ENCODE measurements at regions of chrX and their contacts with region 1.

Region 1: DNA sequence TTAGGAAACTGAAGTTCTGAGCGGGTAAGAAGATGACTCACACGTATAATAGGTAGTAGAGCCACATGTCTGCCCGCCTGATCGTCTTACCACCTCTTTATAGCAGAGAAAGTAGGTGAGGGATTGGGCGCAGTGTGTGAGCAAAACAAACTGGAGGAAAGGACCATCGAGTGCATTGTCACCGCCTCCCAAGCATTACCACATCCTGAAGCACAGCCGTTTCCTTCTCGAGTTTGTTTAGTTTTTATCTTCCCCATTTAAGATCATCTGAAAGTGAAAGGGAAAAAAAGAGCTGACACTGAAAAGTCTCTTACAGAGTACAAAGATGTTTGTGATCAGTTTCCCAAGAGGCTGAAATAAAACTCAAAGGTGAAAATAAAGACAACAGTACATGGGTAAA is 14.8 kb downstream of the PDK3 start:
- DNase-seq: peak; percentile 77 to 94 (median 89)
- H3K4me3 ChIP-seq: peak overlapping the region in 1 of 2 donors; percentile 44
- H3K4me3 Mint-ChIP-seq: peak overlapping the region; percentile 53 to 86 (median 74)
- H3K27ac ChIP-seq: peak overlapping the region; percentile 82
- H3K27ac Mint-ChIP-seq: peak overlapping the region; percentile 86 to 97 (median 92)
- H3K4me1 ChIP-seq: peaks cover 83% of the 10 kb centered on the region
- H3K4me1 Mint-ChIP-seq: peaks cover 42 to 89% (median 64%) of the 10 kb centered on the region in 4 donors
- H3K27me3 ChIP-seq: no peaks in the 10 kb centered on the region
- H3K27me3 Mint-ChIP-seq: no peaks in the 10 kb centered on the region

Region 2: GRCh38 chrX:24435060-24435459 is 44.9 kb before region 1 on chrX:
- CTCF ChIA-PET with region 1: no interaction called
- POLR2A ChIA-PET with region 1: no interaction called
- intact Hi-C with region 1: loop called (anchors 1 kb)
- DNase-seq: no peak
- H3K4me3 ChIP-seq: no peak overlapping the region
- H3K4me3 Mint-ChIP-seq: peak overlapping the region in 5 of 8 donors; percentile 14 to 69 (median 27)
- H3K27ac ChIP-seq: no peak overlapping the region
- H3K27ac Mint-ChIP-seq: no peak overlapping the region
- H3K4me1 ChIP-seq: peaks cover 12% of the 10 kb centered on the region
- H3K4me1 Mint-ChIP-seq: peaks cover 5 to 23% (median 15%) of the 10 kb centered on the region in 4 donors
- H3K27me3 ChIP-seq: no peaks in the 10 kb centered on the region
- H3K27me3 Mint-ChIP-seq: no peaks in the 10 kb centered on the region

Region 3: GRCh38 chrX:24464836-24465531 is 14.9 kb before region 1 on chrX and contains the start of gene PDK3:
- CTCF ChIA-PET with region 1: interaction called, 33 read pairs
- POLR2A ChIA-PET with region 1: interaction called, 117 read pairs
- intact Hi-C with region 1: loop called (anchors 1 kb)
- DNase-seq: peak; percentile 89 to 91 (median 91)
- H3K4me3 ChIP-seq: peak within 1 kb of the TSS; percentile 44 to 62
- H3K4me3 Mint-ChIP-seq: peak within 1 kb of the TSS; percentile 81 to 90 (median 87)
- H3K27ac ChIP-seq: peak within 1 kb of the TSS; percentile 87
- H3K27ac Mint-ChIP-seq: peak within 1 kb of the TSS; percentile 89 to 97 (median 92)
- H3K4me1 ChIP-seq: peaks cover 40% of the 10 kb centered on the region
- H3K4me1 Mint-ChIP-seq: peaks cover 16 to 42% (median 28%) of the 10 kb centered on the region in 4 donors
- H3K27me3 ChIP-seq: no peaks in the 10 kb centered on the region
- H3K27me3 Mint-ChIP-seq: no peaks in the 10 kb centered on the region
- total RNA-seq, gene PDK3: 30.3 to 31.1 TPM

Region 4: DNA sequence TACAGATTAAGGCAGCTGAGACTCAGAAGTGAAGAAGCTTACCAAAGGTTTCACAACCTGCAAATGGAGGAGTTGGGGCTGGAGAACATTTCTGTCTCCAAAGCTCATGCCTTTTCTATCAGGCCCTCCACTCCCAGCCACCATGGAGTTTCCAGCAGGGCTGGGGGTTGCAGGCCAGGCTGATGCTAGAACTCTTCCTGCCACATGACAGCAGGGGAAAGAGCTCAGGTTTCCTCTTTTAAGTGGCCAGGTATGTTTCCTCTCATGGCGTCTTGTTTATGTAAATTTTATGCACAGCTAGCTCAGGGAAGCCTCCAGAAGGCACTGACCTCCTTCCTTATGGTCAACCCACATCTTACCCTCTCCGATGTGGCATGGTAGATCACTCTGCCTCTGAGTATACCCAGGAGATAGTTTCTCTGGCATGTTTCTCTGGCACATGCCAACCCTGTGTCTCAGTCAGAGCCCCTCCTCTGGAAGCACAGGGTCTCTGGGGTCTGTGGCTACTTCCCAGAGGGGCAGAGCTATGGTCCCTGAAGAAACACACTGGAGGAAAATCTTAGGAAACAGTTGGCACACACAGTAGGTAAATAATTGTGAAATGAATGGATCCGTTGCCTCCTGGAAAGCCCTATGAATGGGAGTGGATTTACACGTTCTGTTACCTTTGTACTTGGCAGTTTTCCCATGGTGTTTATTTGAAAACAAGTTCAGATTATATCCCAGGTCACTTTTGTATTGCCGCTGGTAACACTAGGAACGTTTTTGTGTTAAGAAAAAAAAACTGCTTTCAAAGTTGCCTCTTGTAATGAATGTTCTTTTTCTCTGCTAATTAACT is 14.0 kb after region 1 on chrX:
- CTCF ChIA-PET with region 1: interaction called, 19 read pairs
- POLR2A ChIA-PET with region 1: interaction called, 23 read pairs
- intact Hi-C with region 1: loop called (anchors 1 kb)
- DNase-seq: peak in 1 of 5 donors; percentile 26
- H3K4me3 ChIP-seq: no peak overlapping the region
- H3K4me3 Mint-ChIP-seq: peak overlapping the region; percentile 36 to 72 (median 54)
- H3K27ac ChIP-seq: no peak overlapping the region
- H3K27ac Mint-ChIP-seq: peak overlapping the region in 6 of 7 donors; percentile 67 to 91 (median 75)
- H3K4me1 ChIP-seq: peaks cover 33% of the 10 kb centered on the region
- H3K4me1 Mint-ChIP-seq: peaks cover 26 to 47% (median 33%) of the 10 kb centered on the region in 4 donors
- H3K27me3 ChIP-seq: no peaks in the 10 kb centered on the region
- H3K27me3 Mint-ChIP-seq: no peaks in the 10 kb centered on the region

Region 5: DNA sequence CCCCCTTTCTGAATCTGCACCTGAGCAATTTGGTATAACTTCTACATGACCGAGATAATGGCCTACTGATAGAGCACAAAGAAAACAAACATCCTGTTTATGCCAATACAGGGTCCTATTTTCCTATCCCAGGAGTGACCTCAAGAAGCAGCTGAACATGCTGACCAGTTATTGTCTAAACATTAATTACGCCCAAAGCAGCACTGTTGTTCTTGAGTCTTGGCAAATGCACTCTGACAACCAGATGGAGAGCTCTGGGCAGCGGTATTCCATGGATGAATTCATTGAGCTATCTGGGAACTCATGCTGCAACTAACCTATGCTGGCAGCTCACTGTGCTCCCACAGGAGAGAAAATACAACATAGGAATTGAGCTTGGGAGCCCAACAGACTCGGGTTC is 114.6 kb after region 1 on chrX:
- CTCF ChIA-PET with region 1: no interaction called
- POLR2A ChIA-PET with region 1: no interaction called
- intact Hi-C with region 1: no loop called
- DNase-seq: no peak
- H3K4me3 ChIP-seq: no peak overlapping the region
- H3K4me3 Mint-ChIP-seq: no peak overlapping the region
- H3K27ac ChIP-seq: no peak overlapping the region
- H3K27ac Mint-ChIP-seq: no peak overlapping the region
- H3K4me1 ChIP-seq: no peaks in the 10 kb centered on the region
- H3K4me1 Mint-ChIP-seq: no peaks in the 10 kb centered on the region
- H3K27me3 ChIP-seq: no peaks in the 10 kb centered on the region
- H3K27me3 Mint-ChIP-seq: peaks cover 0 to 3% of the 10 kb centered on the region in 2 donors

Region 6: GRCh38 chrX:24982306-24982965 is 502.5 kb after region 1 on chrX:
- CTCF ChIA-PET with region 1: no interaction called
- POLR2A ChIA-PET with region 1: no interaction called
- intact Hi-C with region 1: no loop called
- DNase-seq: no peak
- H3K4me3 ChIP-seq: no peak overlapping the region
- H3K4me3 Mint-ChIP-seq: no peak overlapping the region
- H3K27ac ChIP-seq: no peak overlapping the region
- H3K27ac Mint-ChIP-seq: no peak overlapping the region
- H3K4me1 ChIP-seq: no peaks in the 10 kb centered on the region
- H3K4me1 Mint-ChIP-seq: no peaks in the 10 kb centered on the region
- H3K27me3 ChIP-seq: no peaks in the 10 kb centered on the region
- H3K27me3 Mint-ChIP-seq: no peaks in the 10 kb centered on the region